ENCODE measurements at regions of chr16 and their contacts with region 1.

Region 1: DNA sequence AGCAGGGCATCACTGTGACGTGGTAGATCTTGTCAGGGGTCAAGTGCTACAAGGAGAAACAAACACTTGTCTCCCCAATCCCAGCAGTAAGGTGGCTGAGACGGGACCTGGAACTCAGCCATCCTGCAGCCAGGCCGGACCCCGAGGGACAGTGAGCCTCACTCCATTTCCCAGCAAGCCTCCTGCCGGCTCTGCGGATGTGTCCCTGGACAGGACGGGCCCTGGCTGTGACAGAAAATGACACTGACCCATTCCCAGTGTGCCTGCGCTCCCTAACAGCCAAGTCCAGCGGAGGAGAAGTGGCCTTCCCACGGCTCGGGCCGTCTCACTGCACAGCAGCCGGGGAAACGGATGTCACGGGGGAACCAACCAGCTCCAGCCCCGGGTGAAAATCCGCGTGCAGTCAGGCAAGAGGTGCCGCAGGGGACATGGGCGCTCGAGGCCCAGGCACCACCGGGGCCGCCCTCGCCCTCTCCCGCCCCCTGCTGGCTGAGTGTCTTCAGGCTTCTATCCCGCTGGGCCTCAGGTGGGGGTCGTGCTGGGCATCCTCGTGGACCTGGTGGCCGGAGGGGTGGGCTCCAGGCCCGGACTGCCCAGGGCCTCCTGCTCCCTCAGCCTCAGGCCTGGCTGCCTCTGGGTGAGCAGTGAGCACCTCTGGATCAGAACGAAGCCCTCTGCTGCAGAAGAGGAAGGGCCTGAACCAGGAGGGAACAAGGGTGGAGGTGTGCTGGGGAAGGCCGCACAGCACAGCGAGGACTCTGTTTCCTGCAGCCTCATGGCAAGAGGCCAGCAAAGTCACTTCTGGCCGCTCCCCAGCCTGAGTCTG is 6.7 kb downstream of the HAGHL start:
- DNase-seq: no peak
- H3K4me3 ChIP-seq: no peak overlapping the region
- H3K4me3 Mint-ChIP-seq: no peak overlapping the region
- H3K27ac ChIP-seq: no peak overlapping the region
- H3K27ac Mint-ChIP-seq: no peak overlapping the region
- H3K4me1 ChIP-seq: no peaks in the 10 kb centered on the region
- H3K4me1 Mint-ChIP-seq: peaks cover 0 to 4% (median 0%) of the 10 kb centered on the region in 4 donors
- H3K27me3 ChIP-seq: no peaks in the 10 kb centered on the region
- H3K27me3 Mint-ChIP-seq: no peaks in the 10 kb centered on the region

Region 2: GRCh38 chr16:714558-715476 is 18.8 kb before region 1 on chr16 and contains the start of gene METRN:
- CTCF ChIA-PET with region 1: interaction called, 27 read pairs
- POLR2A ChIA-PET with region 1: interaction called, 71 read pairs
- intact Hi-C with region 1: no loop called
- DNase-seq: peak; percentile 81 to 85 (median 84)
- H3K4me3 ChIP-seq: peak within 1 kb of the TSS in 1 of 2 donors; percentile 43
- H3K4me3 Mint-ChIP-seq: peak within 1 kb of the TSS; percentile 39 to 73 (median 56)
- H3K27ac ChIP-seq: no peak within 1 kb of the TSS
- H3K27ac Mint-ChIP-seq: peak within 1 kb of the TSS in 2 of 7 donors; percentile 35 to 44
- H3K4me1 ChIP-seq: peaks cover 21% of the 10 kb centered on the region
- H3K4me1 Mint-ChIP-seq: peaks cover 0 to 22% (median 9%) of the 10 kb centered on the region in 4 donors
- H3K27me3 ChIP-seq: peaks cover 10% of the 10 kb centered on the region
- H3K27me3 Mint-ChIP-seq: peaks cover 0 to 8% of the 10 kb centered on the region in 2 donors
- total RNA-seq, gene METRN: 6.9 to 7.7 TPM

Region 3: GRCh38 chr16:720990-721764 is 12.4 kb before region 1 on chr16 and contains the start of gene ANTKMT:
- CTCF ChIA-PET with region 1: interaction called, 27 read pairs
- POLR2A ChIA-PET with region 1: interaction called, 71 read pairs
- intact Hi-C with region 1: no loop called
- DNase-seq: peak; percentile 71 to 79 (median 77)
- H3K4me3 ChIP-seq: peak within 1 kb of the TSS; percentile 42 to 60
- H3K4me3 Mint-ChIP-seq: peak within 1 kb of the TSS; percentile 80 to 88 (median 84)
- H3K27ac ChIP-seq: peak within 1 kb of the TSS; percentile 47
- H3K27ac Mint-ChIP-seq: peak within 1 kb of the TSS; percentile 47 to 91 (median 84)
- H3K4me1 ChIP-seq: peaks cover 30% of the 10 kb centered on the region
- H3K4me1 Mint-ChIP-seq: peaks cover 3 to 33% (median 12%) of the 10 kb centered on the region in 4 donors
- H3K27me3 ChIP-seq: no peaks in the 10 kb centered on the region
- H3K27me3 Mint-ChIP-seq: no peaks in the 10 kb centered on the region
- total RNA-seq, gene ANTKMT: 21.5 to 23.5 TPM

Measured in CD4-positive, alpha-beta memory T cell (primary cell).